ENCODE measurements at regions of chr20 and their contacts with region 1.

Region 1: DNA sequence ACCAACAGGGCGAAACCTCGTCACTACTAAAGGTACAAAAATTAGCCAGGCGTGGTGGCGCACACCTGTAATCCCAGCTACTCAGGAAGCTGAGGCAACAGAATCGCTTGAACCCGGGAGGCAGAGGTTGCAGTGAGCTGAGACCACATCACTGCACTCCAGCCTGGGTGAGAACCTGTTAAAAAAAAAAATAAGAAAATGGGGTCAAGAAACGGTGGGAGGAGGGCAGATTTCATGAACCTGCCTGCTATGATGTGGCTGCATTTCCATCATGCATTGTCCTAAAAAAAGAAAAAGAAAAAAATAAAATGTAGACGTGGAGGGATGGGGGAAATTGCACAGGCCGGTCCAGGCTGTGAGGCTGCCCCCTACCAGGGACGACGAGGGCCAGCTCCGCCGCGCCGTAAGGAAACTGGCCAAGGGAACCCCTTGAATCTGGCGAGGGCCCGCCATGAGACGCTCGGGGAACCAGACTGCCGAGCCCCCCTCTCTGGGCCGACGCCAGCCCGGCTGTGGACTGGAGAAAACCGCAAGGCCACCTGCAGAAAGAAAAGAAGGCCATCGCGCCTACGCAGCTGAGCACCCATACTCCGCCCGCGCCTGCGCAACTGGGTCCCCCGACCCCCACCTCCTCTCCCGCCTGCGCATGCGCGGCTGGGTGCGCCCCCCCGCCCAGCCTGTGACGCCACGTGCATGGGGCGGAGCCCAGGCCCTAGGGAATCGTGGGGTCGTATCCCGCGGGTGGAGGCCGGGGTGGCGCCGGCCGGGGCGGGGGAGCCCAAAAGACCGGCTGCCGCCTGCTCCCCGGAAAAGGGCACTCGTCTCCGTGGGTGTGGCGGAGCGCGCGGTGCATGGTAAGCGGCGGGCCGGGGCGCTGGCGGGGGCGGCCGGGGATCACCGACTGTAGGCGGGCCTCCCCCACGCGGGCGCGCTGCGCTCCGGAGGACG is at the start of gene ENTPD6:
- DNase-seq: peak; percentile 80
- H3K4me3 ChIP-seq: peak within 1 kb of the TSS; percentile 82 to 95 (median 91)
- H3K27ac ChIP-seq: peak within 1 kb of the TSS; percentile 51
- H3K4me1 ChIP-seq: peaks cover 11% of the 10 kb centered on the region
- H3K27me3 ChIP-seq: no peaks in the 10 kb centered on the region
- CTCF ChIP-seq: peak in 1 of 2 donors; percentile 18
- total RNA-seq, gene ENTPD6: 82.9 to 130 TPM

Region 2: GRCh38 chr20:24732076-24732475 is 463.2 kb before region 1 on chr20:
- CTCF ChIA-PET with region 1: no interaction called
- dilution Hi-C with region 1: no loop called
- in situ Hi-C with region 1: no loop called
- intact Hi-C with region 1: no loop called
- DNase-seq: no peak
- H3K4me3 ChIP-seq: no peak overlapping the region
- H3K27ac ChIP-seq: no peak overlapping the region
- H3K4me1 ChIP-seq: no peaks in the 10 kb centered on the region
- H3K27me3 ChIP-seq: no peaks in the 10 kb centered on the region
- CTCF ChIP-seq: no peak

Region 3: GRCh38 chr20:25247956-25248785 is 52.9 kb after region 1 on chr20 and contains the start of gene PYGB:
- CTCF ChIA-PET with region 1: no interaction called
- dilution Hi-C with region 1: loop called (anchors 5 kb)
- in situ Hi-C with region 1: loop called (anchors 5 kb)
- intact Hi-C with region 1: loop called (anchors 2 kb)
- DNase-seq: peak; percentile 89
- H3K4me3 ChIP-seq: peak within 1 kb of the TSS; percentile 91 to 98 (median 97)
- H3K27ac ChIP-seq: peak within 1 kb of the TSS; percentile 79
- H3K4me1 ChIP-seq: peaks cover 42% of the 10 kb centered on the region
- H3K27me3 ChIP-seq: no peaks in the 10 kb centered on the region
- CTCF ChIP-seq: no peak
- total RNA-seq, gene PYGB: 475 to 1,432 TPM

Region 4: DNA sequence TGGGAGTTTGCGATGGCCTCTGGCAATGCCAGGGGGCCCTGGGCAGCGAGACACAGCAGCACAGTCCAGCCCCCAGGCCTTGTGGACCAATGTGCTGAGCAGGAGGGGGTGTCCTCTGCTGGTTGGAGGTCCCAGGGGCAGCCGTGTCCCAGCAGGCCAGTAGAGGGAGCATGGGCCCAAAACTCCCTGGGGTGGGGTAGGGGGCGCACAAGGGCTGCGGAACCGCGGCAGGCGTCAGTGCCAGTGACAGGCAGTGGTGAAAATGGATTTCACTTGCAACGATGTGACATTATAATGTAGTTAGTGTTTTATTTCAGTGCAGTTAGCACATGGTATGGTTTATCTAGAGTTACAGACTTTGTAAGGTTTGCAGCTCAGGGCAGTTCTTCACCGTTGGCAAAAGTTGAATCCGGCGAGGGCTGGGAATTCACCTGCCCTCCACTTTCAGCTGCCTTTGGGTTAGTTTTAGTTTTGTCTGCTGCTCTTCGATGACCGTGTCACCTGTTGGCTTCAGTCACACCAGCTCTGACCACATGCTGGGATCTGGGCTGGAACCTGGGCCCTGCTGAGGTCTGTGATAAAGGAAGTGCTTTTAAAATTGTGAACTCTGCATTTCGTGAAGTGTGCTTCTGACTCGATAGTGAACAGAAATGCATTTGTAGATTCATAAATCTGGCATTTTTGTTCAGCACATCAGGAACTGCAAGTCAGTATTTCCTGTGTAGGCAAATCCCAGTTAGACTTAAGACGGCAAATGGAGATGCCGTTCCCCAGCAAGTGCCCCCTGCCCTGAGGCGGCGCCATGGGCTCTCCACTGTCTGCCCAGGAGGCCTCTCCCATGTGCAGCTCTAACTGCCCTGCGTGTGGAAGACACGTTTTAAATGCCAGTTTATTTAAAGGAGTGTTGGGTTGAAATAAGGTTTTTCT is 99.4 kb after region 1 on chr20:
- CTCF ChIA-PET with region 1: no interaction called
- dilution Hi-C with region 1: no loop called
- in situ Hi-C with region 1: no loop called
- intact Hi-C with region 1: loop called (anchors 5 kb)
- DNase-seq: no peak
- H3K4me3 ChIP-seq: no peak overlapping the region
- H3K27ac ChIP-seq: no peak overlapping the region
- H3K4me1 ChIP-seq: peaks cover 62% of the 10 kb centered on the region
- H3K27me3 ChIP-seq: no peaks in the 10 kb centered on the region
- CTCF ChIP-seq: peak; percentile 54 to 64

Region 5: GRCh38 chr20:25399037-25399430 is 203.7 kb after region 1 on chr20:
- CTCF ChIA-PET with region 1: interaction called, 8 read pairs
- dilution Hi-C with region 1: no loop called
- in situ Hi-C with region 1: loop called in 1 of 2 experiments (anchors 25 kb)
- intact Hi-C with region 1: loop called (anchors 5 kb)
- DNase-seq: peak; percentile 65
- H3K4me3 ChIP-seq: no peak overlapping the region
- H3K27ac ChIP-seq: no peak overlapping the region
- H3K4me1 ChIP-seq: no peaks in the 10 kb centered on the region
- H3K27me3 ChIP-seq: no peaks in the 10 kb centered on the region
- CTCF ChIP-seq: peak; percentile 54 to 60

Measured in mammary epithelial cell (primary cell).